ENCODE measurements at regions of chr17 and their contacts with region 1.

Region 1: DNA sequence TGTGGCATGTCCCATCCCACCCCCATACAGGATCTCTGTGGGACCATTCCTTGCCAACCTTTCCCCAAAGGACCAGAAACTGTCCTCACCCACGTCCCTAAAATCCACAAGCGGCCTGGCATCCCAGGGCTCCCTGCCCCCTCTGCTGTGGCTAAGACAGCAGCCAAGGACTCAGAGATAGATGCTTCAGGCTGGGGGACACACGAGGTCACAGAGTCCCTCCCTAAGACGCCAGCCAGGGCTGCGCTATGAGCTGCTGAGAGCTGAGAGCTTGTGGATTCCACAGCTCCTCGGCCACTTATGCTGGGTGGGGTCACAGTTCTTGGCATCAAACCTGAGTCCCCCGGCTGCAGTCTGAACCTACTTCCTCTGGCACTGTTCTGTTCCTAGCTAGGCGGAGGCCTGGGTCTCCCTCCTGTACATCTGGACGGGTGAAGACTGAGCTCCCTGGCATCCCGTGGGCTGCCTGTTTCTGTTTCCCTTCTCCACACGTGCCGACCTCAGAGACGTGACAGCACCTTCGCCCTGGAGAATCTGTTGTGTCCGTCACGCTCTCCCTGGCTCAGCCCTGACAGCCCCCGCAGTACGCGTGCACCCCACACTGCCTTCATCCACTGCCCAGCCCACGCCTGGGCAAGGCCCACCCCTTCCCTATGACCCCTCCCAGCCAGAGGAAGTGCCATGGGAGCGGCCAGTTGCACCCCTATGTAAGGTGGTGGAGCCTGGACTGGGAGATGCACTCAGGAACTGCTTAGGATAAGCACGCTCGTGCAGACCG is 61.2 kb downstream of the ENGASE start:
- DNase-seq: no peak
- H3K4me3 ChIP-seq: no peak overlapping the region
- H3K27ac ChIP-seq: no peak overlapping the region
- H3K4me1 ChIP-seq: no peaks in the 10 kb centered on the region
- H3K27me3 ChIP-seq: peaks cover 81% of the 10 kb centered on the region
- CTCF ChIP-seq: no peak

Region 2: GRCh38 chr17:78412403-78412802 is 723.4 kb before region 1 on chr17:
- CTCF ChIA-PET with region 1: no interaction called
- POLR2A ChIA-PET with region 1: interaction called, 23 read pairs
- intact Hi-C with region 1: no loop called
- DNase-seq: no peak
- H3K4me3 ChIP-seq: no peak overlapping the region
- H3K27ac ChIP-seq: no peak overlapping the region
- H3K4me1 ChIP-seq: peaks cover 8% of the 10 kb centered on the region; the same call in 1 of the 2 replicates
- H3K27me3 ChIP-seq: no peaks in the 10 kb centered on the region
- CTCF ChIP-seq: peak; percentile 35; the same call in 1 of the 2 replicates

Region 3: DNA sequence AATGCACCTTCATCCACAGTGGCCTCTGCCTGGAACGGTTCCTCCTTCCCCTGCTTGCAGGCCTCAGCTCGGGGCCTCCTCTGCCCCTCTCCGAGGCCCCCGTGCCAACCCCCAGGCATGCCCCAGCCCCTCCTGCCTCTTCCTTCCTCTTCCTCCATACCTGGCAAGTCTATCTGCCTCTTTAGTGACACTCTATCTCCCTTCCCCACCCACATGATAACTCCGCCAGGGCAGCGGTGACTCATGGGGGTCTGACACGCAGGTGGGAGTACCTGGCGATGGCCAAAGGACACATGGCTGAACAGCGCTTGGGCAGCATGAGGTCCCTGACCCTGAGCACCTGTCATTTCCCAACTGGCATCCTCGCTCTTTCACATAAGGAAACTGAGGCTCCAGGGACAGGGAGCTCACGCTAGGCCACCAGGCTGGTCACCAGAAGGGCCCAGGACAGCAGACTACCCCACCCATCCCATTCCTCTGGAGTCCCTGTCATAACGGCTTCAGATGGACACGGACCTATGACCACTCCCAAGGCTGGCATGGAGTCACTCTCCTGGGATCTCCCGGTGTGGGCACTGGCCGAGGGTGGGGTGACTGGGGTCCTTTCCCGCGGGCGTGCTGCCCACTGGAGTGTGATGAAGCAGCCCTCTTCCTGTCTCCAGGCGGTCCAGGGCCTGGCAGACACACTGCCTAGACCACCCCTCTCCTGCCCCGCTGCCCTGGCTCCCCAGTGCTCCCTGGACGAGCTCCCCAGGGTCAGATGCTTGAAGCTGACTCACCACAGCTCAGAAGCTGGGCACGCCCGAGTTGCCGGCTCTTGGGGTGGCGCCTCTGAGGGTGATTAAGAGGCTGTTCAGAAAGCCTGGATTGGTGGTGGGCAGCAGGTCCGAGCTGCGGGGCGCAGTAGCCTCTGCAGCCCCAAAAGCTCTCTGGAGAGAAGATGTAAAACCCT is 39.4 kb after region 1 on chr17:
- CTCF ChIA-PET with region 1: no interaction called
- POLR2A ChIA-PET with region 1: no interaction called
- intact Hi-C with region 1: no loop called
- DNase-seq: peak in 1 of 2 experiments; percentile 19
- H3K4me3 ChIP-seq: no peak overlapping the region
- H3K27ac ChIP-seq: no peak overlapping the region
- H3K4me1 ChIP-seq: no peaks in the 10 kb centered on the region
- H3K27me3 ChIP-seq: peaks cover 90% of the 10 kb centered on the region
- CTCF ChIP-seq: no peak

Region 4: GRCh38 chr17:79485419-79485985 is 349.7 kb after region 1 on chr17:
- CTCF ChIA-PET with region 1: no interaction called
- POLR2A ChIA-PET with region 1: no interaction called
- intact Hi-C with region 1: no loop called
- DNase-seq: no peak
- H3K4me3 ChIP-seq: no peak overlapping the region
- H3K27ac ChIP-seq: no peak overlapping the region
- H3K4me1 ChIP-seq: no peaks in the 10 kb centered on the region
- H3K27me3 ChIP-seq: peaks cover 87% of the 10 kb centered on the region
- CTCF ChIP-seq: no peak

Measured in PC-9 (cell line).